Thyroid gland (tissue), 4 donors: ENCODE measurements at regions of chr6 and their contacts with region 1.

Region 1: DNA sequence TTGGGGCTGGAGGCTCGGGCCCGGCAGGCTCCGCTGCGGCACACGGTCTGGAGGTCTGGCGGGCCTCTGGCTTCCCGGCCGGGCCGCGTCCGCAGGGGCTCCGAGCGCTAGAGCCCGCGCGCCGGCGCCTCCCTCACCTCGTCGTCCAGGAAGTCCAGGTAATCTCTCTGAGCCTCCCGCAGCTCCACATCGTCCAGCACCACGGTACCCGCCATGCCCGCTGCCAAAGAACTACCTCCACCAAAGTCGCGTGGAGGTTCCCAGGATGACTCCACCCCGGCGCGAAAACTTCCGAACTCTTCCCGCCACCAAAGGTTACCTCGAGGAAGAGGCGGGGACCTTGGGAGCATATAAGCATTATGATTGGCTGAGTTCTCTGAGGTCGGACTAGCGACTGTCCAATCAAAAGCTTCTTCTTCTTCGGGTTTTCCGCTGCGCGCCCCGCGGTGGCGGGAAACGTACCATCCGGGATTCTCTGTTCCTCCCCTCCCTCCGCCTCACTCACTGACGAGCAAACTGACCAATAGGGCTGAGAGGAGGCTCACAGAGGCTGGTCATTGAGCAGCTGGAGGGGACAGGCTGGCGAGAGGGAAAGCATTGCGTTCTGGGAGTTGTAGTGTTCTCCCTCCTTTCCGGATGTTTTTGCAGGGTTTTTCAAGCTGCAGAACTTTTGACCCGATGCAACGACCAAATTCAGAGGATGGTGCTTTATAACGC is at the start of gene MCM3:
- DNase-seq: peak; percentile 97 to 98
- H3K4me3 ChIP-seq: peak within 1 kb of the TSS; percentile 30 to 55 (median 35)
- H3K27ac ChIP-seq: peak within 1 kb of the TSS in 2 of 3 donors; percentile 7 to 28
- H3K4me1 ChIP-seq: peaks cover 9 to 10% of the 10 kb centered on the region in 2 donors
- H3K27me3 ChIP-seq: no peaks in the 10 kb centered on the region
- CTCF ChIP-seq: peak in 1 of 6 experiments; percentile 17
- POLR2A ChIP-seq: peak in 1 of 2 donors; percentile 33
- total RNA-seq, gene MCM3: 26.1 to 44.5 (median 34.3) TPM

Region 2: GRCh38 chr6:51972659-51973058 is 312.0 kb before region 1 on chr6:
- intact Hi-C with region 1: no loop called
- DNase-seq: no peak
- H3K4me3 ChIP-seq: no peak overlapping the region
- H3K27ac ChIP-seq: no peak overlapping the region
- H3K4me1 ChIP-seq: no peaks in the 10 kb centered on the region
- H3K27me3 ChIP-seq: no peaks in the 10 kb centered on the region
- CTCF ChIP-seq: no peak
- POLR2A ChIP-seq: no peak

Region 3: GRCh38 chr6:52361945-52362442 is 77.4 kb after region 1 on chr6 and contains the start of gene PAQR8:
- intact Hi-C with region 1: loop called (anchors 10 kb)
- DNase-seq: peak; percentile 62 to 69
- H3K4me3 ChIP-seq: peak within 1 kb of the TSS; percentile 48 to 65 (median 53)
- H3K27ac ChIP-seq: peak within 1 kb of the TSS in 2 of 3 donors; percentile 37 to 57
- H3K4me1 ChIP-seq: peaks cover 14 to 30% of the 10 kb centered on the region in 2 donors
- H3K27me3 ChIP-seq: no peaks in the 10 kb centered on the region
- CTCF ChIP-seq: no peak
- POLR2A ChIP-seq: peak; percentile 28 to 77
- total RNA-seq, gene PAQR8: 2.7 to 9.7 (median 5.4) TPM

Region 4: DNA sequence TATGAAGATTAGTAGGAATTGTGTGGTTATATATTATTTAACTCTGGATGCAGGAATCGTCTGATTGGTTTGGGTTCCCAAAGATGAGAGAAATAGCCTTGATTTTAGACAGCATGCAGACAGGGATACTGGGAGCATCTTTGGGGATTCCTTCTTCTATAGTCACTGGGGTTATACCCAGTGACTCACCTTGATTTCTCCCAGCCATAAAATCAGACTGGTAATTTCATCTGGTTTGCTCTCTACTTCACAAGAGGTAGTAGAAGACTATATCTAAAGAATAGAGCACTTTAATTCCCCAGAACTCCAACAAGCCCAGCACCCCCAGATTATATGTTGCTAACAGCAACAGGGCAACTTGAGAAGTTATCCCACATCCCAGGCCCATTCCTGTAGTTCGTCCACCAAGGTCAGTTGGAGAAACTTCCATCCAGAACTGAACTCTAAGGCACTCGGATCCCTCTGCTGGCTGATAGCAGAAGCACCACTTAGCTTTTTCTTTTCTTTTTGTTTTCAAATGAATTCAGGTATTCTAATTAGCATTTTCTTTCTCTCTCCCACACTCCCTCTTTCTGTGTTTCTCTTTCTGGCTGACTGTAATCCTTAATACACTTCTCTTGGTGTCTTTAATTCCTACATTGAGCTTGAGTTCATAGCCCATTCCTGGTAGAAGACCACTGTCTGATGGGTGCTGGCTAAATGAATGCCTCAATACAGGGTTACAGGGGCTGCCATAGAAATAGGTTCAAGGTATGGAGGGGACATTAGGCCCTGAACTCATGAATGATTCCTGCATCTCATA is 115.1 kb after region 1 on chr6:
- intact Hi-C with region 1: loop called (anchors 5 kb)
- DNase-seq: peak; percentile 23 to 41
- H3K4me3 ChIP-seq: no peak overlapping the region
- H3K27ac ChIP-seq: no peak overlapping the region
- H3K4me1 ChIP-seq: no peaks in the 10 kb centered on the region
- H3K27me3 ChIP-seq: no peaks in the 10 kb centered on the region
- CTCF ChIP-seq: peak; percentile 62 to 88 (median 76)
- POLR2A ChIP-seq: no peak